Head of caudate nucleus (tissue), 42 donors: ENCODE measurements at regions of chr1 and their contacts with region 1.

Region 1: DNA sequence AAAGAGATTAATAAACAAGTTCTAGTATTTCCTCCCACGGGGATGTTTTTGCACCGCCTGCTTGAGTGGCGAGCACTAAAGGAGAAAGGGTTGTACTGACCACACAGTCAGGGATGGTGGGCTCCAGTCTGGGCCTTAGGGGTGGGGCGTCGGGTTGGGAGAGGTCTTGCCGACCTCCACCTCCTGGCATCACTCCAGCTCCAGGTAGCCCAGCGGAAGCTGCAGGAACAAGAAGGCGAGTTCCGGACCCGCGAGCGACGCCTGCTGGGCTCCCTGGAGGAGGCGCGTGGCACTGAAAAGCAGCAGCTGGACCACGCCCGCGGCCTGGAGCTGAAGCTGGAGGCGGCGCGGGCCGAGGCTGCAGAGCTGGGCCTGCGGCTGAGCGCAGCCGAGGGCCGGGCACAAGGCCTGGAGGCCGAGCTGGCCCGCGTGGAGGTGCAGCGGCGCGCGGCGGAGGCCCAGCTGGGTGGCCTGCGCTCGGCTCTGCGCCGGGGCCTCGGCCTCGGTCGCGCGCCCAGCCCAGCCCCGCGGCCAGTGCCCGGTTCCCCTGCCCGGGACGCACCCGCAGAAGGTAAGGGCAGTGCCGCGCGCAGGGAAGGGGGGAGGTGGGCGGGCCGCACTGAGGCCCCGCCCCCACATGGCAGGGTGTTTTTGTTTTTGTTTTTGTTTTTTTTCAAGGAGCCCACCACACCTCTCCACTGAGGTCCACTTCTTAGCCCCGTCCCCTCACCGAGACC is 19.7 kb downstream of the MFAP2 start:
- DNase-seq: peak in 40 of 42 donors; percentile 11 to 79 (median 59)

Region 2: DNA sequence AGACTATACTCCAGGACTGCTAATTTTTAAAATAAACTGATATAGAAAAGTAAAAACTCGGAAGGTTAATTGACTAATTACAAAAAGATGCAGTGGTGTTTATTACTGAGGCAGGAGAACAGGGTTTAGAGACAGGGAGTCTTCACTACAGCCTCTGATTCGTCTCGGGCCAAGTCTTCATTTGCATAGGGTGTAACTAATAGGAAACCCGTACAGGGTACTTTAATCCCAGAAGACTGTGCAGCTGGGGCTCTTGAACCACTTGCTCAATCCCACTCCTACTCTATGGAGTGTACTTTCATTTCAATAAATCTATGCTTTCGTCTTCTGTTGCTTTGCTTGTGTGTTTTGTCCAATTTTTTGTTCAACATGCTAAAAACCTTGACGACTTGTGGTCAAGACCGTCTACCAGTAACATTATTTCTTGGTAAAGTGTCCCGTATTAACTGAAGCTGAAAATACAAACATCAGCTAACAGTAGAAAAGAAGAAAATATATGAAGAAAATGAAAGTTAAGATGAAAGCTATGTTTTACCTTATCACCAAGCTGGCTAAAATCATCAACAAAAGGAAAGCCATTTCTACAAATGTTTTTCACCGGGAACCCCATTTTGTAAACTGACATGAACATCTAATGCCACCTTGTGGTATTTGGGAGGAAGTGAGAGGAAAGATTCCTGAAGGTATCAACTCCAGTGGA is 85.1 kb after region 1 on chr1:
- intact Hi-C with region 1: loop called (anchors 5 kb)
- DNase-seq: peak in 3 of 42 donors; percentile 19 to 60 (median 43)